ENCODE measurements at regions of chrX and their contacts with region 1.

Region 1: GRCh38 chrX:152926279-152926678 is 28.4 kb downstream of the ZNF185 start:
- DNase-seq: peak; percentile 89 to 93
- H3K4me3 ChIP-seq: no peak overlapping the region
- H3K27ac ChIP-seq: no peak overlapping the region
- H3K4me1 ChIP-seq: peaks cover 11% of the 10 kb centered on the region
- H3K27me3 ChIP-seq: no peaks in the 10 kb centered on the region
- CTCF ChIP-seq: peak; percentile 90

Region 2: DNA sequence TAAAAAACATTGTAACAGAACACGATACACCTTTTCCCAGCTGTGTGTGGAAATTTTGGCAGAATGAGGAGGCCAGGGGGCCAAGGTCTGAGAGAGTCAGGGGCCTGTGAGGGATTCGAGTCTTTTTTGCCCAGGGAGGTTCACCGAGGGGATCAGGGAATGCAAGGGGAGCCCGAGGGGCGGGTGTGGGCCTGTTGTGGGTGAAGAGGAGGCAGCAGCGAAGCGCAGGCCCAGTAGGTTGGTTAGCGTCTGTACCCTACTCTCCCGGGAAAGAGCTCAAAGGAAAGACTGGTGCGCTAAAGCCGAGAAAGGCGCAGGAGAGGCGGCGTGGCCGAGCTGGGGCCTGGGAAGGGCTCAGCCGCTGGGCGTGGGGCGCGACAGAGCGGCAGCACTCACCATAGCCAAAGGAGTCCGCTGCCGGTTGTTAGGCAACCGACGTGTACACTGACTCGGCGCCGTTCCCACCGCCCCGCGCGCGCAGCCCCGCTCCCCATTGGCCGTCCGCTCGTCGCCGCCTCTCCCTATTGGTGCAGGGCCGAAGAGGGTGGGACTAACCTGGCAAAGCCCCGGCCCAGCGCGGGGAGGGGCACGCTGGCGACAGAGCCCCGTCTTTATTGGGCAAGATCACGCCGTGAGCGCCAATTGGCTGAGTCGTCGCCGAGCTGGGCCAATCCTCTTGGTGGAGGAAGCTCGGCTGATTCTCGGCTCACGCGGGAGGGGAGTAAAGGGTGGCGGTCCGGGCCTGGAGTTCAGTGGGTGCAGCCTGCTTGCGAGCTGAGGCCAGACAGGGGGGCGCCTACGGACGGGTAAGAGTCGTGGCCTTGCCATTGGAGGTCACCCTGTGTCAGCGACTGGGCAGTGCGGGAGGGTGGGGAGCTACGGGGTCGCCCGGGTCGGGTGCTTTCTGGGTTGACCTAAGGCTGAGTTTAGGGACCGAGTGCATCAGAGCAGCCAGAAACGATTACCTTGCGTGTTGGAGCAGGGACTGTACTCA is 95.7 kb before region 1 on chrX and contains the starts of genes CETN2 and NSDHL:
- CTCF ChIA-PET with region 1: no interaction called
- POLR2A ChIA-PET with region 1: interaction called, 8 read pairs
- intact Hi-C with region 1: loop called (anchors 2 kb)
- DNase-seq: peak; percentile 97 to 99
- H3K4me3 ChIP-seq: peak within 1 kb of the TSS; percentile 97
- H3K27ac ChIP-seq: peak within 1 kb of the TSS; percentile 53
- H3K4me1 ChIP-seq: peaks cover 24% of the 10 kb centered on the region
- H3K27me3 ChIP-seq: no peaks in the 10 kb centered on the region
- CTCF ChIP-seq: 0 out of 2 replicates have a peak, but pooled peaks have one; percentile 18
- total RNA-seq, gene CETN2: 66.9 and 78.6 TPM in 2 replicates
- total RNA-seq, gene NSDHL: 40.9 and 55.1 TPM in 2 replicates

Region 3: DNA sequence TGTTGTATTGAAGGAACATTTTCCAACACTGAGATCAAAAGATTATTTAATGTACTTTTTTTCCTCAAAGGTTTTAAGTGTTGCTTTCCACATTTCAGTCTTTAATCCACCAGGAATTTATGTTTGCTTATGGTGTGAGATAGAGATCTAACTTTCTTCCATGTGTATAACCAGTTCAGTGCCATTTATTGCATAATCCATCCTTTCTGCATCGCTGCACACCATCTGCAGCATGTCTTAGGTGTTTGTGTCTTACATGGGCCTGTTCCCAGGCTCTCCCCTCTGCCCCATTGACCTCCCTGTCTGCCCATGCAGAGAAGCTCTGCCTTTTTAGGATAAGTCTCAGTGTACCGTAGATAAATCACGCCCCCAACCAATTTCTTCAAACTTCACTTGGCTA is 65.2 kb before region 1 on chrX:
- CTCF ChIA-PET with region 1: no interaction called
- POLR2A ChIA-PET with region 1: no interaction called
- intact Hi-C with region 1: no loop called
- DNase-seq: peak; percentile 38 to 90
- H3K4me3 ChIP-seq: no peak overlapping the region
- H3K27ac ChIP-seq: 0 out of 2 replicates have a peak overlapping the region, but pooled peaks have one; percentile 1
- H3K4me1 ChIP-seq: peaks cover 18% of the 10 kb centered on the region
- H3K27me3 ChIP-seq: no peaks in the 10 kb centered on the region
- CTCF ChIP-seq: no peak

Measured in PC-9 (cell line).